ENCODE measurements at regions of chr4 and their contacts with region 1.

Region 1: DNA sequence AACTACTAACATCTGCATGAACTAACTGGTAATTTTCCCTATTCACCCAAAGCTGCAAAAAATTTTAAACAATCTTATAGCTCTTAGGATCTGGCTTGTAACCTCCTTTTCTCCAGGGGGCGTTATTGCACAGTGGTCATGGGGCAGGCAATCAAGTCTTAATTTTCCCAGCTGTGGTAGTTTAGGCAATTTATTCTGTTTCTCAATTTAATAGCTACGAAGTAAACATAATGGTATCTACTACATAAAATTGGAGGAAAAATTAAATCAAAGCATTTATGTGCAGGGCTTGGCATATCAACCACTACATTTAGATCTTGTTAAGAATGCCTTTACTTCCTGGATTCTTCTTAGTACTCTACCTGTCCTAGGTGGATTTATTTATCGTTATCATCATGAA is 137.4 kb upstream of the GUCY1A1 start:
- DNase-seq: peak in 1 of 2 experiments; percentile 6
- H3K4me3 ChIP-seq: no peak overlapping the region
- H3K27ac ChIP-seq: peak overlapping the region; percentile 62; the same call in 1 of the 2 replicates
- H3K4me1 ChIP-seq: peaks cover 11% of the 10 kb centered on the region; the same call in 1 of the 2 replicates
- H3K27me3 ChIP-seq: no peaks in the 10 kb centered on the region
- CTCF ChIP-seq: no peak

Region 2: DNA sequence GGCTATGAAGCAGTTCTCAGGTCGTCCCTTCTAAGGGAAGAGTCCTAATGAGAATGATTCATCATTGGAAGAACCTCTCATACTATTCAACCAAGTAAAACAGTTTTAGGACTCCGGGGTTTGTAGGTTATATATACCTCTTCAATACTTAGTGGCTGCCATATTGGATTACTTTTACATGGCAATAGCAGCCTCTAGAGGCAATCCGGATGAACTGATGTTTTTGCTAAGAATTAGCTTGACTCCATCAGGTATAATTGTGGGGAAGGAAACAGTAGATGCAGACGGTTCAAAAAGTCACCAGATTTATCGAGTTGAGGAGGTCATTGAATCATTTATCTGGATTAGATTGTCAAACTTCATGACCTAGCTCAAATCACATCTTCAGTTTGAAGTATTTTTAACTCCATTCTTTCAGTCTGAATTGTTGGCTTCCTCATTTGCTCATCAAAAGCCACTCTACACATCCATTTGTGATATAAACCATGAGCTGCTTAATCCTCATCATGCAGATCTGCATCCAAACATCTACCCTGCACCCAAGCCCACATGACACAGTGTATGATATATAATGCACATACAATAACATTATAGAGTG is 257.9 kb after region 1 on chr4:
- CTCF ChIA-PET with region 1: no interaction called
- POLR2A ChIA-PET with region 1: no interaction called
- intact Hi-C with region 1: loop called (anchors 1 kb)
- DNase-seq: peak in 1 of 2 experiments; percentile 11
- H3K4me3 ChIP-seq: no peak overlapping the region
- H3K27ac ChIP-seq: no peak overlapping the region
- H3K4me1 ChIP-seq: no peaks in the 10 kb centered on the region
- H3K27me3 ChIP-seq: no peaks in the 10 kb centered on the region
- CTCF ChIP-seq: peak; percentile 58

Measured in PC-9 (cell line).